HCT116 (cell line): ENCODE measurements at regions of chr10 and their contacts with region 1.

Region 1: DNA sequence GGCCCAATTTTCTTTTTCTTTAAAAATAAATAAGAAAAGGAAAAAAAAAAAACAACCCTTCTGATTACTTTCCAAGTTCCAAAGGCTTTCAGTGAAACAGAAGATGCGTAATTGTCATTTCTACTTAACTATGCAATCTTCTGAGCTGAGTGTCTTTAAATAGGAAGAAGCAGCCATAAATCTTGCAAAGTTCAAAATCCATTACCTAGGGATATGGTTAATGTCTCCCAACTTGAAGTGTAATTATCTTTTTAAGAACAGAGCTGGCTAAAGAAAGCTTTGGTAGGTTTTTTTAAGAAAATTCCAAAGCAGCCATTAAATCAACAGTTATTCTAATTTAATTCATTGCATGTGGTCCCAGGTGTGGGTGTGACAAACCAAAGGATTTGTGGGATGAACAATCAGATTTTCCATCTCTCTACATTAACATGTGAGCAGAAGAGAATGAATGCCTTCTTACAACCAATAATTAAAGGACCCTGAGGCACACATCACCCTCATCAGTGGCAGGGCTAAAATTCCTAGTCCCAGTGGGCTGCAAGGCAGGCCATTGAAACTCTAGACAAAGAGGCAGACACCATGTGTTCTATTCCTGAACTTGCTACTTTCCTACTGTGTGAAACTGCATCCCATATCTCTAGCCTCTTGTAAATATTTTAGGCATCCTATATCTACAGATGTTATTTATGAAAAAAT is 419.2 kb downstream of the REEP3 start:
- DNase-seq: no peak
- ATAC-seq: no peak
- H3K4me3 ChIP-seq: no peak overlapping the region
- H3K27ac ChIP-seq: no peak overlapping the region
- H3K4me1 ChIP-seq: no peaks in the 10 kb centered on the region
- H3K27me3 ChIP-seq: no peaks in the 10 kb centered on the region; the same call in 1 of the 2 replicates
- CTCF ChIP-seq: no peak
- POLR2A ChIP-seq: no peak
- RAD21 ChIP-seq: no peak

Region 2: DNA sequence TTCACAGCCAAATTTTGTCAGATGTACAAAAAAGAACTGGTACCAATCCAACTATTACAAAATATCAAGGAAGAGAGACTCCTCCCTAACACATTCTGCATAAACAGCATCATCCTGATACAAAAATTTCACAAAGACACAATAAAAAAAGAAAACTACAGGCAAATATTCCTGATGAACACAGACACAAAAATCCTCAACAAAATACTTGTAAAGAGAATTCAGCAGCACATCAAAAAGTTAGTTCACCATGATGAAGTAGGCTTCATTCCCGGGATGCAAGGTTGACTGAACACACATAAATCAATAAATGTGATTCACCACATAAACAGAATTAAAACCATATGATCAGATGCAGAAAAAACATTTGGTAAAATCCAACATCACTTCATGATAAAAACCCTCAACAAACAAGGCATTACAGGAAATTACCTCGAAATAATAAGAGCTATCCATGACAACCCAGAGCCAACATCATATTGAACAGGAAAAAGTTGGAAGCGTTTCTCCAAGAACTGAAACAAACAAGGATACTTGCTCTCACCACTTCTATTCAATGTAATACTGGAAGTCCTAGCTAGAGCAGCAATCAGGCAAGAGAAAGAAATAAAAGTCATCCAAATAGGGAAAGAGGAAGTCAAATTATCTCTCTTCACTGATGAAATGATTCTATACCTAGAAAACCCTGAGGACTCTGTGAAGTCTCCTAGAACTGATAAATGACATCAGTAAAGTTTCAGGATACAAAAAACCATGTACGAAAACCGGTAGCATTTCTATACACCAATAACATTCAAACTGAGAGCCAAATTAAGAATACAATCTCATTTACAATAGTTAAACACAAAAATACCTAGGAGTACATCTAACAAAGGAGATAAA is 196.1 kb before region 1 on chr10:
- CTCF ChIA-PET with region 1: no interaction called
- POLR2A ChIA-PET with region 1: no interaction called
- RAD21 ChIA-PET with region 1: no interaction called
- intact Hi-C with region 1: no loop called
- DNase-seq: no peak
- ATAC-seq: no peak
- H3K4me3 ChIP-seq: no peak overlapping the region
- H3K27ac ChIP-seq: no peak overlapping the region
- H3K4me1 ChIP-seq: no peaks in the 10 kb centered on the region
- H3K27me3 ChIP-seq: no peaks in the 10 kb centered on the region
- CTCF ChIP-seq: no peak
- POLR2A ChIP-seq: no peak
- RAD21 ChIP-seq: no peak

Region 3: DNA sequence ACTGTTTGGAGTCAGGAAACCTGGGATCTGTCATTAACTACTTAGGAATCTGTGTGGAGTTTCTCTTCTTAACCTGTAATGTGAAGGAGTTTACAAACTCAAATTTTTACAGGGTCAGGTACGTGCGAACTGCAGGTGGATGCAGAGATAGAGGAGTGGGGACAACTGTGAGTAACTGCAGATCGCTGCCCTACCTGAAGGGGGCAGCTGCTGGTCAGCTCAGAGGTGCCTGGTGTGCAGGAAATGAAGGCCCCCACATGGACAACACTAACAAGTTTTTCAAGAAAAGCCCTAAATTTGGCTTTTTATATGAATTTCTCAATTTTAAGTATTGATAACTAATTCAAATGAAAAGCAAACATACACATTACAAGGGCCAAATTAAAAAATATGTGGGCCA is 39.2 kb before region 1 on chr10:
- CTCF ChIA-PET with region 1: no interaction called
- POLR2A ChIA-PET with region 1: no interaction called
- RAD21 ChIA-PET with region 1: no interaction called
- intact Hi-C with region 1: loop called (anchors 1 kb)
- DNase-seq: no peak
- ATAC-seq: peak; percentile 98
- H3K4me3 ChIP-seq: no peak overlapping the region
- H3K27ac ChIP-seq: no peak overlapping the region
- H3K4me1 ChIP-seq: no peaks in the 10 kb centered on the region
- H3K27me3 ChIP-seq: no peaks in the 10 kb centered on the region
- CTCF ChIP-seq: peak; percentile 30 to 82 (median 73); a peak in 5 of 6 replicates
- POLR2A ChIP-seq: no peak
- RAD21 ChIP-seq: 0 out of 2 replicates have a peak, but pooled peaks have one; percentile 18

Region 4: DNA sequence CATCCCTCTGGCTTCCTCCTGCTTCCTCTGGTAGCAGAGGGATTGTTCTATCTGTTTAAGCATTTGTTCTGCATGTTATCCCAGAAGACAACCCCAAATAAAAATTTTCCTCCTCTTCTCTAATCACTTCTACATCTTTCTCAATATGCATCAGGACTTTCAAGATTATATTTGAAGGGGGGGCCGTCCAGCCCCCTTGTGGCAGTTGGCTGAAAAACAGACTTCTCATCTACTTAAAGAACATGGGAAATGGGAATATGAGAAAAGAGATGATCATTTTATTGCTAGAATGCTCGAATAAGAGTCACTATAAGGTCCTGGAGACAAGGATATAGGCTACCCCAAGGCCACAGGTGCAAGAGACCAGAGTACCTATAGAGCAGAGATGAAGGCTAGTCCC is 46.8 kb after region 1 on chr10:
- CTCF ChIA-PET with region 1: no interaction called
- POLR2A ChIA-PET with region 1: no interaction called
- RAD21 ChIA-PET with region 1: no interaction called
- intact Hi-C with region 1: no loop called
- DNase-seq: no peak
- ATAC-seq: no peak
- H3K4me3 ChIP-seq: no peak overlapping the region
- H3K27ac ChIP-seq: no peak overlapping the region
- H3K4me1 ChIP-seq: no peaks in the 10 kb centered on the region
- H3K27me3 ChIP-seq: no peaks in the 10 kb centered on the region
- CTCF ChIP-seq: peak in 2 of 3 experiments; percentile 39 to 53; a peak in 4 of 6 replicates
- POLR2A ChIP-seq: no peak
- RAD21 ChIP-seq: no peak